PC-9 (cell line): ENCODE measurements at regions of chr6 and their contacts with region 1.

Region 1: GRCh38 chr6:30616811-30617564 is at the start of gene PPP1R10:
- DNase-seq: peak; percentile 98 to 99
- H3K4me3 ChIP-seq: peak within 1 kb of the TSS; percentile 87
- H3K27ac ChIP-seq: peak within 1 kb of the TSS; percentile 86
- H3K4me1 ChIP-seq: peaks cover 35% of the 10 kb centered on the region
- H3K27me3 ChIP-seq: no peaks in the 10 kb centered on the region
- CTCF ChIP-seq: no peak
- total RNA-seq, gene PPP1R10: 47.6 and 69.5 TPM in 2 replicates

Region 2: GRCh38 chr6:30169658-30170614 is 447.1 kb before region 1 on chr6:
- CTCF ChIA-PET with region 1: no interaction called
- POLR2A ChIA-PET with region 1: no interaction called
- intact Hi-C with region 1: no loop called
- DNase-seq: peak; percentile 11 to 51
- H3K4me3 ChIP-seq: no peak overlapping the region
- H3K27ac ChIP-seq: no peak overlapping the region
- H3K4me1 ChIP-seq: no peaks in the 10 kb centered on the region
- H3K27me3 ChIP-seq: peaks cover 28% of the 10 kb centered on the region
- CTCF ChIP-seq: peak; percentile 87

Region 3: DNA sequence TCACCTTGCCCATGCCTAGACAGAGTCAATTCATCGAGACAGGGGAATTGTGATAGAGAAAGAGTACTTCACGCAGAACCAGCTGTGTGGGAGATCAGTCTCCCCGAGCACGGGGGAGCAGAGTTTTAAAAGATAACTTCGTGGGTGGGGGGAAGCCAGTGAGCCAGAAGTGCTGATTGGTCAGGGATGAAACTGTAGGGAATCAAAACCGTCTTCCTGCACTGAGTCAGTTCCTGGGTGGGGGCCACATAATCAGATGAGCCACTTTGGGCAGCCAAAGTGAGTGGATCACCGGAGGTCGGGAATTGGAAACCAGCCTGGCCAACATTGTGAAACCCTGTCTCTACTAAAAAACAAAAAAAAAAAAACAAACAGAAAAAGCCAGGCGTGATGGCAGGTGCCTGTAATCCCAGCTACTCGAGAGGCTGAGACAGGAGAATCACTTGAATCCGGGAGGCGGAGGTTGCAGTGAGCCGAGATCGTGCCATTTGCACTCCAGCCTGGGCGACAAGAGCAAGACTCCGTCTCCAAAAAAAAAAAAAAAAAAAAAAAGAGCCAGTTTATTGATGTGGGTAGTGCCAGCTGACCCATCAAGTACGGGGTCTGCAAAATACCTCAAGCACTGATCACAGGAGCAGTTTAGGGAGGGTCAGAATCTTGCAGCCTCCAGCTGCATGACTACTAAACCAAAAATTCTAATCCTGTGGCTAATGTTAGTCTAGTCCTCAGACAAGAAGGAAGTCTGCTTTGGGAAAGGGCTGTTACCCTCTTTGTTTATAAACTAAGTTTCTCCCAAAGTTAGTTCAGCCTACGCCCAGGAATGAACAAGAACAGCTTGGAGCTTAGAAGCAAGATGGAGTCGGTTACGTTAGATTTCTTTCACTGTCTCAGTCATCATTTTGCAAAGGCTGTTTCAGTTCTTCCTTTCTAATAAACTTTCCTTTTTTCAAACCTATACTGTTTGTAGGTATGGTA is 294.2 kb before region 1 on chr6:
- CTCF ChIA-PET with region 1: no interaction called
- POLR2A ChIA-PET with region 1: no interaction called
- intact Hi-C with region 1: no loop called
- DNase-seq: no peak
- H3K4me3 ChIP-seq: no peak overlapping the region
- H3K27ac ChIP-seq: no peak overlapping the region
- H3K4me1 ChIP-seq: peaks cover 19% of the 10 kb centered on the region
- H3K27me3 ChIP-seq: no peaks in the 10 kb centered on the region
- CTCF ChIP-seq: no peak

Region 4: DNA sequence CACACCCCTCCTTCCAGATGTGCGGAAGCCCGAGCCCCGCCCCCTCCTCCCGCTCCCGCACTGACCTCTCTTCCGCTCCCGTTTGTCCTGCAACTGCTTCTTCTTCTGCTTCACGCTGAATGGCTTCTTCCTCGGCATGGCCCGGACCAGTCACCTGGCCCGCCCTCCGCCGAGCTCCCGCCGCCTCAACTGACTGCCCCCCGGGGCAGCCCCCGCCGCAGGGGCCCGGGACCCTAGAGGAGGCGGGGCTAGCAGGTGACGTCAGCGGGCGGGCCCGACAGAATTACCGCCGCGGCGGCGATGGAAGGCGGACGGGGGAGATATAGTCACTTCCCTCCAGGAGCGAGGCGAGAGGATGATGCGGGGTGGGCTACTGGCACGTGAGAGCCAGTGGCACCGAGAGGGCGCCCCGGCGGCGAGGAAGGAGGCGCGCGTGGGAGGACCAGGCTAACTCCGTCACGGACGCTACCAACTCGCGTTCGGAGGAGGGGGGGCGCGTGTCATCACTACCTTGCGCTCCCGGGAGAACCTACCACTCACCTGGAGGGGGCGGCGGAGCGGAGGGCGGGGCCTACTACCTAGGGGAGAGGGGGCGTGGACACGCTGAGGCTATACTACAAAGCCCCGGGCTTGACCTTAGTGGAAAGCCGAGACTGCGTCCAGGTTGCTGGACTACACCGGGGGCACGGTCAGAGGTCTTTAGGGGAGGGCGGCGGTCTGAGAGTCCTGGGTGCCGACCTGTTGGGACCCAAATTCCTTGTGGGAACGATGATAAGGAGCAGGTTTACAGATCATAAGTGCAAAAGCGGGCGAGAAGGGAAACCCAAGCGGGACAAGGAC is 60.7 kb before region 1 on chr6 and contains the start of gene GNL1:
- CTCF ChIA-PET with region 1: no interaction called
- POLR2A ChIA-PET with region 1: interaction called, 7 read pairs
- intact Hi-C with region 1: loop called (anchors 1 kb)
- DNase-seq: peak; percentile 89 to 99
- H3K4me3 ChIP-seq: peak within 1 kb of the TSS; percentile 99
- H3K27ac ChIP-seq: peak within 1 kb of the TSS; percentile 79
- H3K4me1 ChIP-seq: peaks cover 17% of the 10 kb centered on the region
- H3K27me3 ChIP-seq: no peaks in the 10 kb centered on the region
- CTCF ChIP-seq: no peak
- total RNA-seq, gene GNL1: 114 and 123 TPM in 2 replicates

Region 5: GRCh38 chr6:30590994-30591393 is 26.0 kb before region 1 on chr6:
- CTCF ChIA-PET with region 1: interaction called, 6 read pairs
- POLR2A ChIA-PET with region 1: interaction called, 6 read pairs
- intact Hi-C with region 1: loop called (anchors 1 kb)
- DNase-seq: peak; percentile 86 to 98
- H3K4me3 ChIP-seq: no peak overlapping the region
- H3K27ac ChIP-seq: peak overlapping the region; percentile 84
- H3K4me1 ChIP-seq: peaks cover 47% of the 10 kb centered on the region
- H3K27me3 ChIP-seq: no peaks in the 10 kb centered on the region
- CTCF ChIP-seq: no peak

Region 6: GRCh38 chr6:30686908-30687658 is 70.1 kb after region 1 on chr6:
- CTCF ChIA-PET with region 1: no interaction called
- POLR2A ChIA-PET with region 1: interaction called, 8 read pairs
- intact Hi-C with region 1: loop called (anchors 2 kb)
- DNase-seq: peak; percentile 80 to 98
- H3K4me3 ChIP-seq: peak overlapping the region; percentile 98
- H3K27ac ChIP-seq: peak overlapping the region; percentile 72
- H3K4me1 ChIP-seq: peaks cover 59% of the 10 kb centered on the region
- H3K27me3 ChIP-seq: no peaks in the 10 kb centered on the region
- CTCF ChIP-seq: no peak

Region 7: GRCh38 chr6:31169527-31170419 is 552.8 kb after region 1 on chr6:
- CTCF ChIA-PET with region 1: no interaction called
- POLR2A ChIA-PET with region 1: interaction called, 24 read pairs
- intact Hi-C with region 1: no loop called
- DNase-seq: peak; percentile 82 to 85
- H3K4me3 ChIP-seq: no peak overlapping the region
- H3K27ac ChIP-seq: no peak overlapping the region
- H3K4me1 ChIP-seq: peaks cover 19% of the 10 kb centered on the region
- H3K27me3 ChIP-seq: no peaks in the 10 kb centered on the region
- CTCF ChIP-seq: no peak

Region 8: DNA sequence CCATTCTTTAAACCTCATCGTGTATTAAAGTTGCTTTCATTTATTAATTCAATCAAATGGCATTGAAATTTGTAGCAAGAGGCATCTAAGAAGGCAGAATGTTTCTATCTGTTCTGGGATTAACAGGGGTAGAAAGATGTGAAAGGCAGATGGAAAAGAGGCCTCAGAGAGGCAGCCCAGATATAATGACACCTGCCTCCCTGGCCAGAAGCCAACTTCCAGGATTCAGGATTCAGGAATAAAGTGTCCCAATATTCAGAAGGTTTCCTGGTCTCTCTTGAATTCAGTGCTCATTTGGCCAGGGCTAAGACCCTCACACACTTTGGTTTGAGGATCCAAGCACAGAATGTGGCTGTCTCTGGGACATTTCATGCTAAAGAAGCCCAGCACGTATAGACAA is 700.0 kb after region 1 on chr6:
- CTCF ChIA-PET with region 1: no interaction called
- POLR2A ChIA-PET with region 1: no interaction called
- intact Hi-C with region 1: no loop called
- DNase-seq: no peak
- H3K4me3 ChIP-seq: no peak overlapping the region
- H3K27ac ChIP-seq: no peak overlapping the region
- H3K4me1 ChIP-seq: no peaks in the 10 kb centered on the region
- H3K27me3 ChIP-seq: peaks cover 8% of the 10 kb centered on the region; the same call in 1 of the 2 replicates
- CTCF ChIP-seq: no peak